Calu3 (cell line): ENCODE measurements at regions of chr5 and their contacts with region 1.

Region 1: DNA sequence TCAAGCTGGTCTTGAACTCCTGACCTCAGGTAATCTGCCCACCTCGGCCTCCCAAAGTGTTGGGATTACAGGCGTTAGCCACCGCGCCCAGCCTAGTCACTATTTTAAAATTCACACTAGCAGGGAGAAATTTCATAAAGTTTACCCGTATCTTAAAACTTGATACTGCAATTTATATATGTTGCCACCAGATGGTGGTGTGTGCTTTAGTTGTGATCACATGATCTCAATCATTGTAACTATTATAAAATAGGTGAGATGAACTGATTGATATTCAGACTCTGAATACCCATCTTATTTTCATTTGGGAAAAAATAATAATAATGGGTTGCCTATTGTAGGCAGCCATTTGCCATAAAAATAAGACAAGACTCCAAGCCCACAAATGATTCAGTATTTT is 1330.4 kb upstream of the WWC1 start:
- DNase-seq: no peak
- H3K4me3 Mint-ChIP-seq: no peak overlapping the region
- H3K27ac Mint-ChIP-seq: no peak overlapping the region
- H3K4me1 Mint-ChIP-seq: peaks cover 45% of the 10 kb centered on the region
- H3K27me3 Mint-ChIP-seq: no peaks in the 10 kb centered on the region
- CTCF ChIP-seq: peak; percentile 14

Region 2: DNA sequence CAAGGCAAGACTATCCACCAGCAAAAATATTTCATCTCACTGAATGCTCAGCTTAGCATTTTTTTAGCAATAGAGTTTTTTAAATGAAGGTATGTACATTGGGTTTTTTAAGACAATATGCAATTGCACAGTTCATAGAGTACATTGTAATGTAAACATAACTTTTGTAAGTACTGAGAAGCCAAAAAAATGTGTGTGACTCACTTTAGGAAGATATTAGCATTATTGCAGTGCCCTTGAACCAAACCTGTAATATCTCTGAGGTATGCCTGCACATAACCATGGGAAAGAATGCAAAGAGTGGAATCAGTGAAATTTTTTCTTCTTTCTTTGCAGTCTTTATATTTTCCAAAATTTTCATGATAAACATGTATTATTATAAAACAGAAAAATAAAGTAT is 202.9 kb before region 1 on chr5:
- CTCF ChIA-PET with region 1: no interaction called
- intact Hi-C with region 1: no loop called
- DNase-seq: no peak
- H3K4me3 Mint-ChIP-seq: no peak overlapping the region
- H3K27ac Mint-ChIP-seq: no peak overlapping the region
- H3K4me1 Mint-ChIP-seq: no peaks in the 10 kb centered on the region
- H3K27me3 Mint-ChIP-seq: no peaks in the 10 kb centered on the region
- CTCF ChIP-seq: no peak

Region 3: GRCh38 chr5:166938071-166938470 is 23.0 kb before region 1 on chr5:
- CTCF ChIA-PET with region 1: interaction called, 10 read pairs
- intact Hi-C with region 1: no loop called
- DNase-seq: no peak
- H3K4me3 Mint-ChIP-seq: no peak overlapping the region
- H3K27ac Mint-ChIP-seq: no peak overlapping the region
- H3K4me1 Mint-ChIP-seq: no peaks in the 10 kb centered on the region
- H3K27me3 Mint-ChIP-seq: no peaks in the 10 kb centered on the region
- CTCF ChIP-seq: no peak